B cell (primary cell): ENCODE measurements at regions of chr19 and their contacts with region 1.

Region 1: GRCh38 chr19:9796113-9796773 is 22.6 kb downstream of the FBXL12 start:
- DNase-seq: peak; percentile 92
- ATAC-seq: peak; percentile 18
- H3K4me3 ChIP-seq: no peak overlapping the region
- H3K4me3 Mint-ChIP-seq: peak overlapping the region; percentile 23
- H3K27ac ChIP-seq: peak overlapping the region; percentile 52 to 72
- H3K27ac Mint-ChIP-seq: peak overlapping the region; percentile 79
- H3K4me1 ChIP-seq: peaks cover 0 to 19% of the 10 kb centered on the region in 2 donors
- H3K4me1 Mint-ChIP-seq: peaks cover 12% of the 10 kb centered on the region
- H3K27me3 ChIP-seq: no peaks in the 10 kb centered on the region
- H3K27me3 Mint-ChIP-seq: no peaks in the 10 kb centered on the region
- CTCF ChIP-seq: peak; percentile 79

Region 2: GRCh38 chr19:9205501-9206113 is 590.6 kb before region 1 on chr19:
- CTCF ChIA-PET with region 1: interaction called, 27 read pairs
- POLR2A ChIA-PET with region 1: no interaction called
- intact Hi-C with region 1: no loop called
- DNase-seq: peak; percentile 73
- ATAC-seq: peak; percentile 57
- H3K4me3 ChIP-seq: peak overlapping the region in 4 of 5 experiments; percentile 21 to 42 (median 33)
- H3K4me3 Mint-ChIP-seq: peak overlapping the region; percentile 78
- H3K27ac ChIP-seq: no peak overlapping the region
- H3K27ac Mint-ChIP-seq: no peak overlapping the region
- H3K4me1 ChIP-seq: peaks cover 0 to 4% of the 10 kb centered on the region in 2 donors
- H3K4me1 Mint-ChIP-seq: peaks cover 6% of the 10 kb centered on the region
- H3K27me3 ChIP-seq: no peaks in the 10 kb centered on the region
- H3K27me3 Mint-ChIP-seq: peaks cover 4% of the 10 kb centered on the region
- CTCF ChIP-seq: peak; percentile 97

Region 3: GRCh38 chr19:9406798-9407352 is 389.4 kb before region 1 on chr19:
- CTCF ChIA-PET with region 1: no interaction called
- POLR2A ChIA-PET with region 1: no interaction called
- intact Hi-C with region 1: loop called (anchors 10 kb)
- DNase-seq: peak; percentile 61
- ATAC-seq: peak; percentile 72
- H3K4me3 ChIP-seq: peak overlapping the region; percentile 42 to 79 (median 70)
- H3K4me3 Mint-ChIP-seq: peak overlapping the region; percentile 86
- H3K27ac ChIP-seq: no peak overlapping the region
- H3K27ac Mint-ChIP-seq: peak overlapping the region; percentile 50
- H3K4me1 ChIP-seq: peaks cover 9 to 16% of the 10 kb centered on the region in 2 donors
- H3K4me1 Mint-ChIP-seq: peaks cover 12% of the 10 kb centered on the region
- H3K27me3 ChIP-seq: no peaks in the 10 kb centered on the region
- H3K27me3 Mint-ChIP-seq: no peaks in the 10 kb centered on the region
- CTCF ChIP-seq: no peak

Region 4: DNA sequence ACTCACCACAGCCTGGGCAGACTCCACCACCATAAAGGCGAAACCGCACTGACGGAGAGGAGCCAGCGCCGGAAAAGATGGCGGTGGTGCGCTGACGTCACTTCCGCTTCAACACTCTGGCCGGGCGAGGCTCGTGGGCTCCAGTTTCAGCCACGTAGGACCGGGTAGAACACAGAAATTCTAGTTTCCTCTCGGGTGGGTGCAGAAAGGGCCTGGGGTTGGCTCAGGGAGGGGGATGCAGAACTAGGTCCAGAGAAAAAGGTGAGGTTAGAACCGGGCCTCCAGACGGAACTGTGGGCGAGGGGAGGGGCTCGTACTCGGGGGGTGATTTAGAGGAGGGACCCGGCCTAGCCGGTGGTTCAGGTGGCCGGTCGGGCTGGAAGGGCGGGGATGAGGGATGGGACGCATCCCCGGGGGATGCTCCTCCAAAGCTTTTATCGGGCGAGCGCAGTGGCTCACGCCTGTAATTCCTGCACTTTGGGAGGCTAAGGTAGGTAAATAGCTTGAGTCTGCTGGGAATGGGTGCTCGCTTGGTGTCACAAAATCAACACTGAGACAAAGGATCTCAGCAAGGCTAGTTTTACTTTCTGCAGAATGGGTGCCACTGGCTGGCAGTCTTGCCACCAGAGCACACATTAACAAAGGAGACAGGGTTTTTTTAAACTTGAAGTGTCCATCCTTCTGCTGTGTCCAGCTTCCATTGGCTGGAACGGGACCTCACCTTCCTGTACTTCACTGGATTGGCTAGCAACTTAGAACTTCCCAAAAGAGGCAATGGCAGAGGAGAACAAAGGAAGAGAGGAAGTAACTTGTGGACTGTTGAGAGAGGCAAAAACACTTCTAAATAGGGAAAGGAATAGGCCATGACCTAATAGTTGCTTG is 174.8 kb before region 1 on chr19 and contains the start of gene ZNF561:
- CTCF ChIA-PET with region 1: interaction called, 30 read pairs
- POLR2A ChIA-PET with region 1: no interaction called
- intact Hi-C with region 1: loop called (anchors 1 kb)
- DNase-seq: peak; percentile 95
- ATAC-seq: peak; percentile 86
- H3K4me3 ChIP-seq: peak within 1 kb of the TSS; percentile 56 to 91 (median 89)
- H3K4me3 Mint-ChIP-seq: peak within 1 kb of the TSS; percentile 100
- H3K27ac ChIP-seq: peak within 1 kb of the TSS; percentile 83 to 94
- H3K27ac Mint-ChIP-seq: peak within 1 kb of the TSS; percentile 100
- H3K4me1 ChIP-seq: peaks cover 12 to 21% of the 10 kb centered on the region in 2 donors
- H3K4me1 Mint-ChIP-seq: peaks cover 22% of the 10 kb centered on the region
- H3K27me3 ChIP-seq: no peaks in the 10 kb centered on the region
- H3K27me3 Mint-ChIP-seq: peaks cover 2% of the 10 kb centered on the region
- CTCF ChIP-seq: no peak
- total RNA-seq, gene ZNF561: 44.5 and 56.8 TPM in 2 replicates

Region 5: GRCh38 chr19:9729162-9729561 is 67.1 kb before region 1 on chr19:
- CTCF ChIA-PET with region 1: no interaction called
- POLR2A ChIA-PET with region 1: no interaction called
- intact Hi-C with region 1: no loop called
- DNase-seq: no peak
- ATAC-seq: no peak
- H3K4me3 ChIP-seq: no peak overlapping the region
- H3K4me3 Mint-ChIP-seq: no peak overlapping the region
- H3K27ac ChIP-seq: no peak overlapping the region
- H3K27ac Mint-ChIP-seq: no peak overlapping the region
- H3K4me1 ChIP-seq: no peaks in the 10 kb centered on the region
- H3K4me1 Mint-ChIP-seq: no peaks in the 10 kb centered on the region
- H3K27me3 ChIP-seq: no peaks in the 10 kb centered on the region
- H3K27me3 Mint-ChIP-seq: peaks cover 3% of the 10 kb centered on the region
- CTCF ChIP-seq: no peak

Region 6: GRCh38 chr19:9752701-9753443 is 43.4 kb before region 1 on chr19:
- CTCF ChIA-PET with region 1: no interaction called
- POLR2A ChIA-PET with region 1: no interaction called
- intact Hi-C with region 1: no loop called
- DNase-seq: no peak
- ATAC-seq: no peak
- H3K4me3 ChIP-seq: no peak overlapping the region
- H3K4me3 Mint-ChIP-seq: no peak overlapping the region
- H3K27ac ChIP-seq: no peak overlapping the region
- H3K27ac Mint-ChIP-seq: no peak overlapping the region
- H3K4me1 ChIP-seq: no peaks in the 10 kb centered on the region
- H3K4me1 Mint-ChIP-seq: no peaks in the 10 kb centered on the region
- H3K27me3 ChIP-seq: no peaks in the 10 kb centered on the region
- H3K27me3 Mint-ChIP-seq: no peaks in the 10 kb centered on the region
- CTCF ChIP-seq: no peak

Region 7: GRCh38 chr19:9768175-9769112 is 27.8 kb before region 1 on chr19 and contains the start of gene ZNF846:
- CTCF ChIA-PET with region 1: interaction called, 9 read pairs
- POLR2A ChIA-PET with region 1: interaction called, 4 read pairs
- intact Hi-C with region 1: loop called (anchors 1 kb)
- DNase-seq: peak; percentile 96
- ATAC-seq: peak; percentile 98
- H3K4me3 ChIP-seq: peak within 1 kb of the TSS; percentile 52 to 96 (median 88)
- H3K4me3 Mint-ChIP-seq: peak within 1 kb of the TSS; percentile 96
- H3K27ac ChIP-seq: peak within 1 kb of the TSS; percentile 69 to 94
- H3K27ac Mint-ChIP-seq: peak within 1 kb of the TSS; percentile 98
- H3K4me1 ChIP-seq: peaks cover 0 to 13% of the 10 kb centered on the region in 2 donors
- H3K4me1 Mint-ChIP-seq: peaks cover 15% of the 10 kb centered on the region
- H3K27me3 ChIP-seq: no peaks in the 10 kb centered on the region
- H3K27me3 Mint-ChIP-seq: no peaks in the 10 kb centered on the region
- CTCF ChIP-seq: no peak
- total RNA-seq, gene ZNF846: 18.2 and 24.5 TPM in 2 replicates

Region 8: GRCh38 chr19:9785367-9786331 is 10.6 kb before region 1 on chr19:
- CTCF ChIA-PET with region 1: no interaction called
- POLR2A ChIA-PET with region 1: no interaction called
- intact Hi-C with region 1: no loop called
- DNase-seq: peak; percentile 97
- ATAC-seq: peak; percentile 81
- H3K4me3 ChIP-seq: peak overlapping the region; percentile 45 to 94 (median 75)
- H3K4me3 Mint-ChIP-seq: peak overlapping the region; percentile 92
- H3K27ac ChIP-seq: peak overlapping the region; percentile 80 to 97
- H3K27ac Mint-ChIP-seq: peak overlapping the region; percentile 95
- H3K4me1 ChIP-seq: peaks cover 5 to 14% of the 10 kb centered on the region in 2 donors
- H3K4me1 Mint-ChIP-seq: peaks cover 22% of the 10 kb centered on the region
- H3K27me3 ChIP-seq: no peaks in the 10 kb centered on the region
- H3K27me3 Mint-ChIP-seq: no peaks in the 10 kb centered on the region
- CTCF ChIP-seq: no peak

Region 9: DNA sequence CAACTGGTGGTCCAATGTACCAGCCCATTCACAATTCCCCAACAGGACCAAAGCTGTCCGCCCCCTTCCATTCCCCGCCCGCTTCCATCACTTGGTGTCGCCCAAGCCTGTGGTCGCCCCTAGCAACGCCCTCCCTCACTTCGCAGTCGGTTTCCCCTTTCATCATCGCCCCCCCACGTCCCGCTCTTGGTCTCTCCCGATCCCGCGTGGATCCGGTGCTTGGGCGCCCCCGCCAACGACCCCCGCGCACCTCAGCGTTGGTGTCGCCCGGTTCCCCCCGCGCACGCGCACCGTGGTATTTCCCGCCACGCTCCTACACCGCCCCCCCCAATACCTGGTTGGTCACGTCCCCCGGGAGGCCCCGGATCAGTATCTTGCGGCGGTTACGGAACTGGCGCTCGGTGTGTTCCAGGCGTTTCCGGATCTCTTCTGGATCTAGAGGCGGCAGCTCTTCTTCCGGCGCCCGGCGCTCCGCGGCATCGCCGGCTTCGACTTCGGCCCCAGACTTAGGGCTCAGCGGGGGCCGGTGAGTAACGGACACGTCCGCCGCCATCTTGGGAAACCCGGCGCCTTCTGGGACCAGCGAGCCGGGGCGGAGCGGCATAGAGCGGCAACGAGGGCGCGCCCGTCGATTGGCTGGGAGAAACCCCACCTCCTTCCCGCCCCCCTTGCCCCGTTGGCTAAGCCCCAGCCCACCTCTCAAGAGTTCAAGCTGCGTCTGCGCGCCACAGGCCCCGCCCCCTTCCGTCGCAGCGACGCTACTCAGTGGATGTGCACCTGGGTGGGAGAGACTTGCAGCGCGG is 536.9 kb after region 1 on chr19 and contains the start of gene RAVER1:
- CTCF ChIA-PET with region 1: no interaction called
- POLR2A ChIA-PET with region 1: interaction called, 10 read pairs
- intact Hi-C with region 1: no loop called
- DNase-seq: peak; percentile 99
- ATAC-seq: peak; percentile 97
- H3K4me3 ChIP-seq: peak within 1 kb of the TSS; percentile 63 to 94 (median 83)
- H3K4me3 Mint-ChIP-seq: peak within 1 kb of the TSS; percentile 97
- H3K27ac ChIP-seq: peak within 1 kb of the TSS; percentile 90 to 91
- H3K27ac Mint-ChIP-seq: peak within 1 kb of the TSS; percentile 97
- H3K4me1 ChIP-seq: peaks cover 14 to 24% of the 10 kb centered on the region in 2 donors
- H3K4me1 Mint-ChIP-seq: peaks cover 21% of the 10 kb centered on the region
- H3K27me3 ChIP-seq: no peaks in the 10 kb centered on the region
- H3K27me3 Mint-ChIP-seq: no peaks in the 10 kb centered on the region
- CTCF ChIP-seq: no peak
- total RNA-seq, gene RAVER1: 54.6 and 62.7 TPM in 2 replicates